HEK293 (cell line): ENCODE measurements at regions of chr14 and their contacts with region 1.

Region 1: GRCh38 chr14:105490572-105491366 is at the start of gene TEDC1:
- H3K4me3 ChIP-seq: peak within 1 kb of the TSS; percentile 81
- H3K27ac ChIP-seq: peak within 1 kb of the TSS; percentile 95
- H3K4me1 ChIP-seq: peaks cover 5% of the 10 kb centered on the region
- CTCF ChIP-seq: peak; percentile 7; the same call in 1 of the 2 replicates

Region 2: GRCh38 chr14:105375635-105376057 is 115.1 kb before region 1 on chr14:
- CTCF ChIA-PET with region 1: interaction called, 74 read pairs
- POLR2A ChIA-PET with region 1: interaction called, 10 read pairs
- H3K4me3 ChIP-seq: no peak overlapping the region
- H3K27ac ChIP-seq: no peak overlapping the region
- H3K4me1 ChIP-seq: no peaks in the 10 kb centered on the region
- CTCF ChIP-seq: no peak

Region 3: GRCh38 chr14:105468603-105469241 is 22.0 kb before region 1 on chr14:
- CTCF ChIA-PET with region 1: interaction called, 36 read pairs
- POLR2A ChIA-PET with region 1: interaction called, 10 read pairs
- H3K4me3 ChIP-seq: no peak overlapping the region
- H3K27ac ChIP-seq: no peak overlapping the region
- H3K4me1 ChIP-seq: peaks cover 15% of the 10 kb centered on the region
- CTCF ChIP-seq: no peak

Region 4: GRCh38 chr14:105473677-105474482 is 16.9 kb before region 1 on chr14:
- CTCF ChIA-PET with region 1: interaction called, 36 read pairs
- POLR2A ChIA-PET with region 1: interaction called, 10 read pairs
- H3K4me3 ChIP-seq: peak overlapping the region; percentile 43
- H3K27ac ChIP-seq: no peak overlapping the region; the same call in 1 of the 2 replicates
- H3K4me1 ChIP-seq: peaks cover 16% of the 10 kb centered on the region
- CTCF ChIP-seq: no peak

Region 5: GRCh38 chr14:105527661-105528581 is 37.2 kb after region 1 on chr14:
- CTCF ChIA-PET with region 1: interaction called, 13 read pairs
- POLR2A ChIA-PET with region 1: interaction called, 3 read pairs
- H3K4me3 ChIP-seq: peak overlapping the region; percentile 40
- H3K27ac ChIP-seq: peak overlapping the region; percentile 74; the same call in 1 of the 2 replicates
- H3K4me1 ChIP-seq: 0 out of 2 replicates have a peak, but pooled peaks cover 2% of the 10 kb centered on the region
- CTCF ChIP-seq: peak; percentile 92